ENCODE measurements at regions of chr2 and their contacts with region 1.

Region 1: GRCh38 chr2:63692002-63692606 is 103.3 kb downstream of the MDH1 start:
- DNase-seq: no peak
- ATAC-seq: peak in 1 of 4 donors; percentile 28
- H3K4me3 ChIP-seq: no peak overlapping the region
- H3K27ac ChIP-seq: no peak overlapping the region
- H3K4me1 ChIP-seq: peaks cover 0 to 4% (median 0%) of the 10 kb centered on the region in 12 donors
- H3K27me3 ChIP-seq: no peaks in the 10 kb centered on the region
- CTCF ChIP-seq: peak; percentile 38 to 72 (median 62)
- POLR2A ChIP-seq: no peak

Region 2: DNA sequence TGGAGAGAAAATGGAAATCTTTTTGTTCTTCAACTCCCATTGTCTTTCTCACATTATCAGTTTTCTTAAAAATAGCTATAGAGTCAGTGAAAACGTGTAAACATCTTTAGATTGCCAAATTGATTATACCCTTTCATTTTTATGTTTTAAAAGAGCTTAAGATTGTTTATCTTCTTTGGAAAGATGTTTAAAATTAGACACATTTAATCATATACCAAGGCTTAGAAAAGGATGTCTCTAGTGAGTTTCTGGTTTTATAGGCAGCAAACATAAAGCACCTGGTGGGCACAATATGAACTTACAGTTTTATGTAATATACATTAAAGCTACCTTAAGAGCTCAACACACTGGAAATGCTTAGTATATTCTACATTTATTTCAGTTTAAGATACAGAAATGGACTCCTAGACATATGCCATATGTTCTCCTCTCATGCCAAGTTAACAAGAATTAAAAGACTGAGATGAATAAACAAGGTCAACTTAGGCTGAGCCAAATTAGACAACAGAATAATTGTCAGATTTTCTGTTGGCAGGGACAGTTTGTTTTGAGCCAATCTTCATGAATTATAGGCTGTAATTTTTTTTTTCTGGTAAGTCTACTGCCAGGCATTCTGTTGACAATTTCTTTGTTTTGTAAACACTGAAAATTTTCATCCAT is 528.8 kb before region 1 on chr2:
- intact Hi-C with region 1: no loop called
- DNase-seq: no peak
- ATAC-seq: no peak
- H3K4me3 ChIP-seq: no peak overlapping the region
- H3K27ac ChIP-seq: no peak overlapping the region
- H3K4me1 ChIP-seq: no peaks in the 10 kb centered on the region
- H3K27me3 ChIP-seq: no peaks in the 10 kb centered on the region
- CTCF ChIP-seq: no peak
- POLR2A ChIP-seq: no peak

Region 3: DNA sequence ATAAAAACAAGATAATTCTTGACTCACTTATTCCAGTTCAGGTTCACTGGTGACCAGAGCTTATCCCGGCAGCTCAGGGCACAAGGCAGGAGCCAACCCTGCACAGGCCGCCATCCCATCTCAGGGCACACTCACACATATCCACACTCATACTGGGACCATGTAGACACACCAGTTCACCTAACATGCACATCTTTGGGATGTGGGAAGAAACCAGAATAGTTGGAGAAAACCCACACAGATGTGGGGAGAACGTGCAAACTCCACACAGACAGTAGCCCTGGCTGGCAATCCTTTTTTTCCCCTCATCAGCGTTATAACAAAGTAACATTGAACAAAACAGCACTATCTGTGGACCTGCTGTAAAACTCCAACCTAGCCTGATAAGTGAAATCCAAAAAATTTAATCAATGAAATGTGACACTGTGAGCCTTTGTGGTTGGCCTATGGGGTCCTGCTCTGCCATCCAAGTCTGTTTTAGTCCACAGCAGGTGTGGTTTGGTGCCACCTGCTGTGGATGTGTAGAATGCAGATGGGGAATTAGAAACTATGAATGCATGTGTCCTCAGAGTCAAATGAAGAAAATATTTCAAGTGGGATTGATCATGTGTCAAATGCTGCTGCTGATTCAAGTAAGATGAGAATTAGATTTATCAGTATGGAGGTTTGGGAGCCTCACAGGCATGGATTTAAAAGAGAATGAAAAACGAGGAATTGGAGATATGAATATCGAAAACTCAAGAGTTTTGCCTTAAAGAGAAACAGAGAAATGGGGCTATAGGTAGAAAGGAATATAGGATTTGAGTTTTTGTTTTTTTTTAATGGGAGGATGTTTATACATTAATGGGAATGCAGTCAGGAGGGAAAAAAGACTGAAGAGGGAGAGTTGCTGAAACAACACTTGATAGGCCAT is 196.6 kb after region 1 on chr2:
- intact Hi-C with region 1: loop called in 4 of 10 experiments (anchors 5 to 10 kb)
- DNase-seq: peak in 1 of 5 donors; percentile 13
- ATAC-seq: peak; percentile 57 to 83 (median 68)
- H3K4me3 ChIP-seq: no peak overlapping the region
- H3K27ac ChIP-seq: peak overlapping the region in 1 of 12 donors; percentile 16
- H3K4me1 ChIP-seq: peaks cover 0 to 13% (median 0%) of the 10 kb centered on the region in 12 donors
- H3K27me3 ChIP-seq: no peaks in the 10 kb centered on the region
- CTCF ChIP-seq: peak; percentile 47 to 76 (median 67)
- POLR2A ChIP-seq: no peak